ENCODE measurements at regions of chr9 and their contacts with region 1.

Region 1: GRCh38 chr9:128927731-128928411 is 7.1 kb downstream of the PHYHD1 start:
- DNase-seq: peak; percentile 49
- H3K4me3 ChIP-seq: no peak overlapping the region
- H3K27ac ChIP-seq: peak overlapping the region; percentile 41 to 50
- H3K4me1 ChIP-seq: peaks cover 3% of the 10 kb centered on the region
- H3K27me3 ChIP-seq: no peaks in the 10 kb centered on the region
- CTCF ChIP-seq: peak; percentile 83 to 97 (median 96)
- POLR2A ChIP-seq: no peak

Region 2: DNA sequence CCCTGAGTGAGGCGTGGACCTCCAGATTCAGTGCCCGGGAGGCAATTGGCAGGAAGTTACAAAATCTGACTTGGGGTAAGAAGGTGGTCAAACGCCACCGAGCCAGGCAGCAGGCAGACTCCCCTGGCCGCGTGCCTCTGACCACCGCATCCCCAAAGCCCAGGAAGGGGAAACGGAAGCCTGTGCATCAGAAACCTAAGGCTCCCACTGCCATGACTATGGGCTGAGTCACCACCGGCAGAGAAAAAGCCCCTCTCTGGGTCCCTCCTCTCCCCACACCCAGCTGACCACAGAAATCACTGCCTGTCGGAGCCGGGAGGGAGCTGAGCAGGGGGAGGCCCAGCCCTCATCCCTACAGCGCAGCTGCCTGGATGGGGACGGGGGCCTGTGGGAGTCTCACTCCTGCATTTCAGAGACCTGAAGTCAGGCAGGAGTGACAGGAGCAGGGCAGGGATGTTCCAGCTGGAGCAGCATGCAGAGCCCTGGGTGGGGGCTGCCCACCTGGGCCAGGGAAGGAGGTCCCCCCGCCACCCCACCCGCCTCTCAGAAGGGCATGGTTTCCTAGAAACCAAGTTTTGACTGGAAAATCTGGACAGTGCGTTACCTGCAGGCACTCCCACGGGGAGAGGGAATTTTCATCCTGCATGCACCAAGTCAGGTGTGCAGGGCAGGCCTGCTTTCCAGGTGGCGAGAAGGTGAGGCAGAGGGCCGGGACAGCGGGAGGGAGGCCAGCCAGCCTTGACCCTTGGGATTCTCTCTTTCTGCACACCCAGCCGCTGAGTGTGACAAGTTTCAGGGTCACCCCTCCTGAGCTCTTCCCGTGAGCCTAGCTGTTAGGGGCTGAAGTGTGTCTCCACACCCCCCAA is 1408.3 kb before region 1 on chr9:
- intact Hi-C with region 1: loop called (anchors 10 kb)
- DNase-seq: no peak
- H3K4me3 ChIP-seq: no peak overlapping the region
- H3K27ac ChIP-seq: no peak overlapping the region
- H3K4me1 ChIP-seq: peaks cover 7% of the 10 kb centered on the region
- H3K27me3 ChIP-seq: no peaks in the 10 kb centered on the region
- CTCF ChIP-seq: no peak
- POLR2A ChIP-seq: no peak

Region 3: DNA sequence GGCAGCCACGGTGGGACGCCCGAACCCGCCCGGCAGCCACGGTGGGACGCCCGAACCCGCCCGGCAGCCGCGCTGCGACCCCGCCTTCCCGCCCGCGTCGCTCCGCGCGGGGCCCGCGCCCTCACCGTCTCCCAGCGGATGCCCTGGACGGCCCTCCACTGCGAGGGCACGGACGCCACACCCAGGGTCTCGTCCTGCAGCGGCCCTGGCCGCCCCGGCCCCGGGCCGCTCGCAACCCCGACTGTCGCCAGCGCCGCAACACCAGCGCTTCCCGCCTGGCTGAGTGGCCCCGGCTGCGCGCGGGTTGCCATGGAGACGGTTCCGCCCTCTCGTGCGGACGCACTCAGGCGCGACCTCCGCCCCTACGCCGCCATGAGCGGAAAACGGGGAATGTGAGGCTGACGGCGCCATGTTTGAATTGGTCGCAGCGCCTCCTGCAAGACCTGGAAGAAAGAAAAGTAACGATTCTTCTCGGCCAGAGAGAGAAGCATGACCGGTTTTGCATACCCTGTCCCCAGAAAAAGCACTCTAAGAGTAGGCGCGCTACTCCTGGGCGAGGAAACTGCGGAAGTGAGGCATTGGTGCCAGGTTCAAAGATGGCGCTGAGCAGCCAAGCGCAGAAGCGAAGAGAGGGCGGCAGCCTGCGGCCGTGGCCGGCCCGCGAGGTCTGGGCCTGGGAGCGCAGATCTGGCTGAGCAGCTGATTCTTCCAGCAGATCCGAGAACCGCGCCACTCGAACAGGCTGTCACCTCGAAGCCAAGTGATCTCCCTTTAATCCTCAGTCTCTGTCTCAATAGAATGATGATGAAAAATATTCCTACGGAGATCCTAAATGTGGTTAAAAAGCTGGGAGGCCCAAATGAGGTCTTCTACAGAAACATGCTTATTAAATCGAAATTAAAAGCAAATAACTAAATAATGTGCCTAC is 271.2 kb before region 1 on chr9 and contains the start of gene DYNC2I2:
- intact Hi-C with region 1: no loop called
- DNase-seq: peak; percentile 95
- H3K4me3 ChIP-seq: peak within 1 kb of the TSS; percentile 49 to 88
- H3K27ac ChIP-seq: peak within 1 kb of the TSS; percentile 95 to 96
- H3K4me1 ChIP-seq: no peaks in the 10 kb centered on the region
- H3K27me3 ChIP-seq: no peaks in the 10 kb centered on the region
- CTCF ChIP-seq: peak in 2 of 4 experiments; percentile 7 to 26
- POLR2A ChIP-seq: peak; percentile 65
- total RNA-seq, gene DYNC2I2: 66.1 to 80.1 TPM

Region 4: DNA sequence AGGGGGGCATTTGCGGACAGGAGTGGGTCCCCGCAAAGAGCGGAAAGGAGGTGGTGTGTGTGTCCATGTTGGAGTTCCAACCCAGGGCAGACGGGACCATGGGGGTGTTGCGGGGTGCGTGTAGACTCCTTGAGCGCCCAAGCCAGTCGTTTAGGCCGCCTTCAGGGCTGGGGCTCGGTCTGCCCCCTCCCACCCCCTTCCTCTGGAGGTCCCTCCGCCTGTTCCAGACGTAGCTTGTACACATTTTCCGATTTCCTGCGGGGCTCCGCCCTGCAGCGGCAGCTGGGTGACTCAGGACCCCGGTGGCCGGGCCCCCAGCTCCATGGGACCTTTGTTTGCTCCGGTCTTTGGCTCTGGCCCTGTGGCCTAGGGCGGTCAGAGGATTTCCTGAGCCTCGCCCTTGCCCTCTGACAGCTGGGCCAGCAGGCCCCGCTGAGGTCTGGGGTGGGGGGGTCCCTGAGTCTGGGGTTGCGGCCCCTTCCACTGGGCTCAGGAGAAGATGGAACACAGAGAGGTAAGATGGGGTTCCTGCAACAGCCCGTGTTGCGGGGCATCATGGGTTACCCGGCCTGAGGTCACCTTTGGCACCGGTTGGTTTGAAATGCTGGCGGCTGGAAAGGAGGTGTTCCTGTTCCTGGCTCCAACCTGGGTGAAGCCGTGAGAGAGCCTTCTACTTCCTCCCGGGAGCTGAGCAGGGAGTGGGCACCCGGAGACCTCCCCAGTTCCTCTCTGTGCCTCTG is 224.1 kb before region 1 on chr9:
- intact Hi-C with region 1: no loop called
- DNase-seq: no peak
- H3K4me3 ChIP-seq: peak overlapping the region; percentile 58 to 67
- H3K27ac ChIP-seq: peak overlapping the region in 1 of 2 donors; percentile 74
- H3K4me1 ChIP-seq: no peaks in the 10 kb centered on the region
- H3K27me3 ChIP-seq: no peaks in the 10 kb centered on the region
- CTCF ChIP-seq: no peak
- POLR2A ChIP-seq: no peak

Region 5: DNA sequence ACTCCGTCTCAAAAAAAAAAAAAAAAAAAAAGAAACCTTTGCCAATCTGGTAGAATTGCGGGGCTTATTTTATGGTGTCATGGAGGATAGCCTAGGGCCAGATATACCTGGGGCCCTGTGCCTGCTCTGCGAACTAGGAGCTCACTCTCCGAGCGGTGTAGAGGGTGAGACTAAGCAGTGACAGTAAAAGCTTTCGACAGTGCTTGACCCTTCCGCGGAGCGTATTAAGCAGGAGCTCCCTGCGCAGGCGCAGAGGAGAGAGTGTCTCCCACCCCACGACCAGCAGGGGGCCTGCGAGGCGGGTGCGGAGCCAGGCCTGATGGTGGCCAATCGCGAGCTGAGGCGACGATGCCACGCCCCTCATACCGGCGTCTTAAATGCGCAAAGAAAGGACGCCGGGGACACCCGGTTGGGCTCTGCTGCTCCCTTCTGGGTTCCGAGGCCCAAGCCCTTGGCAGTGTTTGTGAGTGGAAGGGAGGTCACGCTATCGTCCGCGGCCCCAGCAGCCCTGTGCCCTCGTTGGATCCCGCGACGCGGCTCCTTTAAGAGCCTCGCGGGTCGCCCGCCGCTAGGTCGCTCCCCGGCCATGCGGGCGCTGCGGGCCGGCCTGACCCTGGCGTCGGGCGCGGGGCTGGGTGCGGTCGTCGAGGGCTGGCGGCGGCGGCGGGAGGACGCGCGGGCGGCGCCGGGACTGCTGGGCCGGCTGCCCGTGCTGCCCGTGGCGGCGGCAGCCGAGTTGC is 109.6 kb before region 1 on chr9 and contains the start of gene ENDOG:
- intact Hi-C with region 1: no loop called
- DNase-seq: peak; percentile 96
- H3K4me3 ChIP-seq: peak within 1 kb of the TSS; percentile 54 to 63
- H3K27ac ChIP-seq: peak within 1 kb of the TSS; percentile 80 to 82
- H3K4me1 ChIP-seq: peaks cover under 1% of the 10 kb centered on the region
- H3K27me3 ChIP-seq: no peaks in the 10 kb centered on the region
- CTCF ChIP-seq: peak; percentile 93 to 100 (median 96)
- POLR2A ChIP-seq: peak; percentile 95
- total RNA-seq, gene ENDOG: 29.9 to 87.2 TPM

Region 6: GRCh38 chr9:128863647-128864046 is 64.2 kb before region 1 on chr9:
- intact Hi-C with region 1: loop called (anchors 1 kb)
- DNase-seq: no peak
- H3K4me3 ChIP-seq: no peak overlapping the region
- H3K27ac ChIP-seq: peak overlapping the region; percentile 65 to 73
- H3K4me1 ChIP-seq: peaks cover 15% of the 10 kb centered on the region
- H3K27me3 ChIP-seq: no peaks in the 10 kb centered on the region
- CTCF ChIP-seq: peak; percentile 86 to 93 (median 88)
- POLR2A ChIP-seq: no peak